ENCODE measurements at regions of chr4 and their contacts with region 1.

Region 1: DNA sequence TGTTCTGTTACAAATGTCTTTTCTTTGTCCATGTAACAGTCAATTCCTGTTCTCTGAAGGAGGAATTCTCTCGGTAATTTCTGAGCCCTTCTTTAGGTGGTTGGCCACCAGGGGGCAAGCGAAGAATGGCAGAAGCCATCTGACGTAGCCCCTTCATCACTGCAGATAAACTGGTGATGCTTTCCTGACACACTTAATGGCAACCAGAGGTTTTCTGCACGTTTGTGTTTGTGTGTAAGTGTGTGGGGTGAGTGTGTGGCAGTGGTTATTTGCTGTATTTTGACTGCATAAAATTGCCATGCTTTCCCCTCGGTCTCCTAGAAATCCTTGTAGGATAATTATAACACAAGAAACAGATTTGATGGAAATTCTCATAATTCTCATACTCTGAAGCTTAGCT is 64.8 kb upstream of the STOX2 start:
- DNase-seq: peak; percentile 77
- H3K4me3 ChIP-seq: no peak overlapping the region
- H3K27ac ChIP-seq: no peak overlapping the region
- H3K4me1 ChIP-seq: no peaks in the 10 kb centered on the region
- CTCF ChIP-seq: peak; percentile 93

Region 2: GRCh38 chr4:184053434-184053833 is 213.1 kb after region 1 on chr4:
- CTCF ChIA-PET with region 1: no interaction called
- POLR2A ChIA-PET with region 1: no interaction called
- intact Hi-C with region 1: no loop called
- DNase-seq: no peak
- H3K4me3 ChIP-seq: no peak overlapping the region
- H3K27ac ChIP-seq: no peak overlapping the region
- H3K4me1 ChIP-seq: no peaks in the 10 kb centered on the region
- CTCF ChIP-seq: no peak

Region 3: DNA sequence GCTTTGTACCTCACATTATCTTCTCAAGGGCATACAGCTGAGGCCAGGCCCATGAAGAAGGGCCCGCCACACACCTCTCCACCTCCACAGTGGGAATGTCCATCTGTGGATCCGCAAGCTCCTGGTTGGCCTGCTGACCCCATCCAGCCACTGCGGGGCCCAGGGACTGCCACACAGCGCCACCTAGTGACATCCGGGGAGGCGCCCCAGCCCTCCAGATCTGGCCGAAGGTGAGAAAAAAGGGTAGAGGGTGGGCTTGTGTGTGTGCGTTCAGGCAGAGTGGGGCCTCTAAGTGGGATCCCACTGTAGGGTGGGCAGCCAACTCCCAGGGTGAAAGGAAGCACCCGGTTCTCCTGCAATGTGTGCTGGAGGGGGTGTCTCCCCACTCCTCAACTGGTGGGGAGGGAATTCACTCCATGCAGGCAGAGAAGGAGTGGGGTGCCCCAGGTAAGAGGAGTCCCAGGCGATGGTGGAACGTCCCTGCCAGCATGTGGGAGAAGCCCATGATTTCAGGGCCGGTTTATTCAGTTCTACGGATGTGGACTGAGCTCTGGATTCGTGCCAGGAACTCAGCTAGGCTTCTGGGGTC is 260.1 kb after region 1 on chr4:
- CTCF ChIA-PET with region 1: no interaction called
- POLR2A ChIA-PET with region 1: interaction called, 3 read pairs
- intact Hi-C with region 1: loop called (anchors 1 kb)
- DNase-seq: peak; percentile 51
- H3K4me3 ChIP-seq: no peak overlapping the region
- H3K27ac ChIP-seq: no peak overlapping the region
- H3K4me1 ChIP-seq: no peaks in the 10 kb centered on the region
- CTCF ChIP-seq: peak; percentile 94

Region 4: GRCh38 chr4:184168406-184169019 is 328.2 kb after region 1 on chr4:
- CTCF ChIA-PET with region 1: no interaction called
- POLR2A ChIA-PET with region 1: no interaction called
- intact Hi-C with region 1: loop called (anchors 1 kb)
- DNase-seq: peak; percentile 46
- H3K4me3 ChIP-seq: no peak overlapping the region
- H3K27ac ChIP-seq: no peak overlapping the region
- H3K4me1 ChIP-seq: no peaks in the 10 kb centered on the region
- CTCF ChIP-seq: peak; percentile 87

Region 5: DNA sequence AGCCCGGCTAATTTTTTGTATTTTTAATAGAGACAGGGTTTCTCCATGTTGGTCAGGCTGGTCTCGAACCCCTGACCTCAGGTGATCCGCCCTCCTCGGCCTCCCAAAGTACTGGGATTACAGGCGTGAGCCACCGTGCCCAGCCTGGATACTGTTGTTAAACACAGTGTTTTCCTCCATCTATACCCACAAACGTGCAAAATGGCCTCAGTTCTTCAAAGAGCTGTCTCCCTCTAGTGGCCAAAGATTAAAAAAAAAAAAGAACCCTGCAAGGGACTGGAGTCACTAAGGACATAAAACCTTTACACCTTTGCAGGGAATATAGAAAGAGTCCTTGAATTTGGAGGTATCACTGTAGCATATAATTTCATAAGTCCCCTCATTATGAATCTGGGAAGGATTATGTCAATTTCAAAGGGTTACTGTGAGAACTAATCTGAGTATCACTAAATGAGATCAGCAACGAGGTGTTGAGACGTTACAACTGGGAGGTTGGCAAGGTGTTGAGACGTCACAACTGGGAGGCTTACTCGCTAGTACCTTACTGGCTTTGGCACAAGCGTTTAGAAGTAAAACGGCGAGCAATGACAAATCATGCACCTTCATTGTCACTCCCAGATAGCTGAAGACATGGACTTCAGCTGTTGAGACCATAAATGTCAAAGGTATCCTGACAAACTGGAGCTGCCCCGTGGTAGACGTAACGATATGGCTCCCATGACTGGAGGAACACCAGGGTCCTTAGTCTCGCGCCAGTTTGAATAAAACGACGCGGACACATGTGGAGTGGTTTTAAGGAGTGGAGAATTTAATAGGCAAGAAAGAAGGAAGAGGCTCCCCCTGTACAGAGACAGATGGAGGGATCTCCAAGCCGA is 410.7 kb after region 1 on chr4:
- CTCF ChIA-PET with region 1: no interaction called
- POLR2A ChIA-PET with region 1: no interaction called
- intact Hi-C with region 1: loop called (anchors 5 kb)
- DNase-seq: peak; percentile 77
- H3K4me3 ChIP-seq: no peak overlapping the region
- H3K27ac ChIP-seq: no peak overlapping the region
- H3K4me1 ChIP-seq: no peaks in the 10 kb centered on the region
- CTCF ChIP-seq: peak; percentile 88

Region 6: DNA sequence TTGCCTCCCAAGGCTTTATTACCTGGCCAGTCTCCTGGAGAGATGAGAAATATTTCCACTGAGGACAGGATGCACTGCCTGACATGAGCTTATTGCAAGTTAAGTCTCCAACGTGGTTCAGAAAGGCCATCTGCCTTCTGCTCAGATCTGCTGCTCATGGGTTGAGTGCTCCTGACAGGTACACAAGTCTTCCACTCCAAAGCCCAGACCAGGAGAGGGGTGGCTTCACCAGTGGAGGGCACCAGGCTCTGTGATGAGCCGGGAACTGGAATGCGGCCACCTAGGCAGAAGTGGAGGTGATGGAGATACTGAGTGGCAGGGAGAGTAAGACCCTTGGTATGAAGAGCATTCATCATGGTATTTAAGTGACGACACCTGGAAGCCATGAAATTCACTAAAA is 713.6 kb after region 1 on chr4:
- CTCF ChIA-PET with region 1: no interaction called
- POLR2A ChIA-PET with region 1: no interaction called
- intact Hi-C with region 1: loop called (anchors 10 kb)
- DNase-seq: no peak
- H3K4me3 ChIP-seq: no peak overlapping the region
- H3K27ac ChIP-seq: no peak overlapping the region
- H3K4me1 ChIP-seq: no peaks in the 10 kb centered on the region
- CTCF ChIP-seq: no peak

Measured in OCI-LY7 (cell line).